Breast epithelium (tissue), 4 donors: ENCODE measurements at regions of chr5 and their contacts with region 1.

Region 1: DNA sequence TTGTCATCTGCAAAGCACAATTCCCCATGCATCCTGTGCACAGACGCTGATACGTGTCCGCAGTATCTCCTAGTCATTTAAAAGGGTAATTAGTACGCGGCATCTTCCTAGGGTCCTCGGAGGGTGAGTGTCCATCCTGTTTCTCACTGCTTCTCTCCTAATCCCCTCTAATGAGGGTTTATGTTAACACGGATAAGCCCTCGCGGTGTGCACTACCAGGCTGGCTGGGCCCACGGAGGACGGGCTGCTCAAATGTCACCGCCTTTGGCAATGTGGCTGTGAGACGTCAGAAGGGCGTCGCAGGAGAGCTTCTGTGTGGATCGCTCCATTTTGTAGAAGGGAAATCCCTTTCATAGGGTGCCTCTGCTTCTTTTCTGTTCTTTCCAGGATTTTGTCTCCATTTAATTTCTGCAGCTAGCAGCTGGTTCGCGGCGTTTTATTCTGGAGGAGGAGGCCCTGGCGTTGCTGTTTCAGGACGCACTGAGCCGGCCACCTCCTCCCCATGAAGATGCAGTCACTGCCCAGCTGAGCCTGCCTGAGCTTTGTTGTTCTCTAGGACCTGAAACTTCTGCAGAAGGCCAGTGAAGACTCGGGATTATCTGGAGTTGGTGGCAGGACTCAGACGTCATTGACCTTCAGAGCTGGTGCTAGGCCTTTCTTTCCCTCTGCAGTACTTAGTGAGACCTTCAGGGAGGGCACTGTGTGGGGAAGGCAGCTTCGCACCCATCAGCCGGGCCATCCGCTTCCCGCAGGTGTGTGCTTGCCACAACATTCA is 326.1 kb upstream of the IRX1 start:
- DNase-seq: no peak
- H3K4me3 ChIP-seq: no peak overlapping the region
- H3K27ac ChIP-seq: no peak overlapping the region
- H3K4me1 ChIP-seq: no peaks in the 10 kb centered on the region
- H3K27me3 ChIP-seq: peaks cover 0 to 18% of the 10 kb centered on the region in 2 donors
- CTCF ChIP-seq: no peak
- POLR2A ChIP-seq: no peak

Region 2: GRCh38 chr5:2266641-2267240 is 1002.8 kb before region 1 on chr5:
- intact Hi-C with region 1: no loop called
- DNase-seq: peak in 1 of 2 donors; percentile 48
- H3K4me3 ChIP-seq: no peak overlapping the region
- H3K27ac ChIP-seq: no peak overlapping the region
- H3K4me1 ChIP-seq: no peaks in the 10 kb centered on the region
- H3K27me3 ChIP-seq: no peaks in the 10 kb centered on the region
- CTCF ChIP-seq: no peak
- POLR2A ChIP-seq: no peak

Region 3: GRCh38 chr5:3092664-3093063 is 176.9 kb before region 1 on chr5:
- intact Hi-C with region 1: no loop called
- DNase-seq: no peak
- H3K4me3 ChIP-seq: no peak overlapping the region
- H3K27ac ChIP-seq: no peak overlapping the region
- H3K4me1 ChIP-seq: no peaks in the 10 kb centered on the region
- H3K27me3 ChIP-seq: no peaks in the 10 kb centered on the region
- CTCF ChIP-seq: no peak
- POLR2A ChIP-seq: no peak

Region 4: DNA sequence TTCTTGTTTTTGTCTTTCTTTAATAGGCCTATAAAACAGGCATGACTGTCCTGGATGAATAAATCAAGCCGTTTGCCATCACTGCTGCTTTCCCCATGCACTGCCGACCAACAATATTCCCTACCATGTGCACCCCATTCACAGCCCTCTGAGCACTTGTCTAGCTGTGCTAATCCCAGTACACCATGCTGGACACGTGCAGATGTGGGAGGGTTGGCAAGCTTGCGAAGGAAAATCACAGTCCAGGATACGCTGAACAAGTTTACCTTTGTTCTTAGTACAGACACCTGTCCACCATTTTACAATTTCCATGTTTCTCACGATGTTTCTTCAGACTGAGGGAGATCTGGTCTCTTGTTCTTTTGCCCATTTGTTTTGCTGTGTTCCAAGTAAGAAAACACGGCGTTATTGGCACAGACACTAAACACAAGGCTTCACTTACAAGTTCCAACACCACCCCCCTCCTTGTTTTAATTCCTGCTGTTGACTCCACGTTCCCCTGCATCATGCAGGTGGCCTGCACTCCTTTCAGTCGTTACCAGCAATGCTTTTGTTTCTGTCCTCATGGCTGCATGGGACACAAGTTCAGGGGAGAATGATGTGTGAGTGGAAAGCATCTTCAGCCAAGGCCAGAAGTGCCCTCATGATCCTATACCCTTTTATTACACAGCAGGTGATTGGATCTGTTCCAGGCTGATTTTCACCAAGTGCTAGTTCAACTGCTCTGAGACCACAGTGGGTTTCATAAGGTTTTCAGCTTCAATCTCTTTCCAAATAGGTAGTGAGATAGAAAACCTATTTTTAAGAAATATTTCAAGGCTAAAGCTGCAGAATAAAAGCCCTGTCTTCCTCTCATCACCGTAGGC is 934.9 kb after region 1 on chr5:
- intact Hi-C with region 1: loop called (anchors 5 kb)
- DNase-seq: no peak
- H3K4me3 ChIP-seq: no peak overlapping the region
- H3K27ac ChIP-seq: no peak overlapping the region
- H3K4me1 ChIP-seq: no peaks in the 10 kb centered on the region
- H3K27me3 ChIP-seq: no peaks in the 10 kb centered on the region
- CTCF ChIP-seq: no peak
- POLR2A ChIP-seq: no peak